ENCODE measurements at regions of chr19 and their contacts with region 1.

Region 1: GRCh38 chr19:47243776-47244547 is 12.4 kb upstream of the CCDC9 start:
- DNase-seq: peak; percentile 94
- H3K4me3 Mint-ChIP-seq: no peak overlapping the region
- H3K27ac Mint-ChIP-seq: no peak overlapping the region
- H3K4me1 Mint-ChIP-seq: peaks cover 5% of the 10 kb centered on the region
- H3K27me3 Mint-ChIP-seq: no peaks in the 10 kb centered on the region
- CTCF ChIP-seq: peak; percentile 95

Region 2: DNA sequence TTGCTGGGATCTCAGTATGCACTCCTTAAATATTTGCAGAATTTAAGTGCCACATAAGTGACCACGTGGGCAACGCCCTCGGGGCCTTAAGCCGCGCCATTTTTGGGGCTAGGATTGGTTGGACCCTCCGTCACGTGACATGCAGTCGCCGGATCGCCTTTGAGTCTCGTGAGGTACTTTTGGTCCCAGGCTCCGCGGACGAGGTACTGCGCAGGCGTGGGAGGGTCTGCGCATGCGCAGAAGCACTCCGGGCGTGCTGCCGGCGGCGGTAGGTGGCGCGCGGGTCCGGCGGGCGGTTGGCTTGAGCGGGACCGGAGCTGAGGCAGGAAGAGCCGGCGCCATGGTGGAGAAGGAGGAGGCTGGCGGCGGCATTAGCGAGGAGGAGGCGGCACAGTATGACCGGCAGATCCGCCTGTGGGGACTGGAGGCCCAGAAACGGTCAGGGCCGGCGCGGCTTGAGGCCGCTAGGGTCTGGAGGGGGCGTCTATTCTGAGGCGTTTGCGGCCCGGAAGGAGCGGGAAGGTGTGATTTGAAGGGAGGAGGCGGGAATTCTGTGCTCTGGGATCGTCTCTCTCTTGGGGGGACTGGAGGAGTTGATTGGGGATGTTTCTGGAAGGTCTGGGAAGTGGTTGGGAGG is 113.3 kb before region 1 on chr19 and contains the start of gene SAE1:
- CTCF ChIA-PET with region 1: interaction called, 8 read pairs
- POLR2A ChIA-PET with region 1: interaction called, 10 read pairs
- intact Hi-C with region 1: loop called (anchors 5 kb)
- DNase-seq: peak; percentile 98
- H3K4me3 Mint-ChIP-seq: peak within 1 kb of the TSS; percentile 99
- H3K27ac Mint-ChIP-seq: peak within 1 kb of the TSS; percentile 92
- H3K4me1 Mint-ChIP-seq: peaks cover 35% of the 10 kb centered on the region
- H3K27me3 Mint-ChIP-seq: no peaks in the 10 kb centered on the region
- CTCF ChIP-seq: peak; percentile 23
- total RNA-seq, gene SAE1: 76.1 and 81.7 TPM in 2 replicates

Region 3: DNA sequence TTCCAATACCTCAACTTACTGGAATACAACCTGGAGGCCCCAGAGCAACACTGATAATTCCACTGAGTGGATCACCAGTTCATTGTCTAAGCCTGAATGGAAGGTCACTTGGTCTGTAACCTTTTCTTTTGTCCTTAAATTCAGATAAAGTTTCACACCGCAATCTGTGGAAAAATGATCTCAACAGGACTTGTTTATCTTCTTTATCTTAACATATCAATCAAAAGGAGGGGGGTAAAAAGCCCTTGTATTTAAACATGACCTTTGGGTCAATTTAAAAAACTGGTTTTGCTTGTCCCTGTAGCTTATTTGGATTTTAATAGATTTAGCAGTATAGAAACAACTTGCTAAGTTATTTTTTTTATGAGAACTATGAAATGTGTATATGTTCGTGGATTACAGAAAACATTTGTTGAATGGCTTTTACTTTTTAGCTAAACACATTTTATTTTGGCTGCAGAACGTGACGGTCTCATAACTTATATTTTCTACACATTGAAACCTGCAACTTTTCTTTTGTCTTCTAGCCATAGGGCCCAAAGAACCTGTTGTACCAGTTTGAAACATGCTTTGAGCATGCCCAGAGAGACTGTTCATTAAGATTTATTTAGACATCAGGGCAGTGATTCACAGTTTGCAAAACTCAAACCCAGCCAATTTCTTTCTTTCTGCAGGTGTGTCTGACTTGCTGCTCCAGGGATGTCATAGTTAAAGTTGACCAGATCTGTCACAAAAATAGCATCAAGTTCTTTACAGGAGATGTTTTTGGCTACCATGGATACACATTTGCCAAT is 91.5 kb before region 1 on chr19:
- CTCF ChIA-PET with region 1: interaction called, 62 read pairs
- POLR2A ChIA-PET with region 1: interaction called, 7 read pairs
- intact Hi-C with region 1: loop called (anchors 1 kb)
- DNase-seq: no peak
- H3K4me3 Mint-ChIP-seq: peak overlapping the region; percentile 13
- H3K27ac Mint-ChIP-seq: peak overlapping the region; percentile 79
- H3K4me1 Mint-ChIP-seq: peaks cover 13% of the 10 kb centered on the region
- H3K27me3 Mint-ChIP-seq: no peaks in the 10 kb centered on the region
- CTCF ChIP-seq: no peak

Region 4: GRCh38 chr19:47210689-47211316 is 33.2 kb before region 1 on chr19:
- CTCF ChIA-PET with region 1: interaction called, 292 read pairs
- POLR2A ChIA-PET with region 1: interaction called, 75 read pairs
- intact Hi-C with region 1: loop called (anchors 1 kb)
- DNase-seq: peak; percentile 86
- H3K4me3 Mint-ChIP-seq: peak overlapping the region; percentile 31
- H3K27ac Mint-ChIP-seq: peak overlapping the region; percentile 88
- H3K4me1 Mint-ChIP-seq: peaks cover 7% of the 10 kb centered on the region
- H3K27me3 Mint-ChIP-seq: no peaks in the 10 kb centered on the region
- CTCF ChIP-seq: peak; percentile 77

Region 5: GRCh38 chr19:47231215-47231984 is 12.6 kb before region 1 on chr19:
- CTCF ChIA-PET with region 1: interaction called, 52 read pairs
- POLR2A ChIA-PET with region 1: interaction called, 46 read pairs
- intact Hi-C with region 1: loop called (anchors 1 kb)
- DNase-seq: peak; percentile 76
- H3K4me3 Mint-ChIP-seq: no peak overlapping the region
- H3K27ac Mint-ChIP-seq: peak overlapping the region; percentile 87
- H3K4me1 Mint-ChIP-seq: peaks cover 12% of the 10 kb centered on the region
- H3K27me3 Mint-ChIP-seq: no peaks in the 10 kb centered on the region
- CTCF ChIP-seq: no peak

Region 6: DNA sequence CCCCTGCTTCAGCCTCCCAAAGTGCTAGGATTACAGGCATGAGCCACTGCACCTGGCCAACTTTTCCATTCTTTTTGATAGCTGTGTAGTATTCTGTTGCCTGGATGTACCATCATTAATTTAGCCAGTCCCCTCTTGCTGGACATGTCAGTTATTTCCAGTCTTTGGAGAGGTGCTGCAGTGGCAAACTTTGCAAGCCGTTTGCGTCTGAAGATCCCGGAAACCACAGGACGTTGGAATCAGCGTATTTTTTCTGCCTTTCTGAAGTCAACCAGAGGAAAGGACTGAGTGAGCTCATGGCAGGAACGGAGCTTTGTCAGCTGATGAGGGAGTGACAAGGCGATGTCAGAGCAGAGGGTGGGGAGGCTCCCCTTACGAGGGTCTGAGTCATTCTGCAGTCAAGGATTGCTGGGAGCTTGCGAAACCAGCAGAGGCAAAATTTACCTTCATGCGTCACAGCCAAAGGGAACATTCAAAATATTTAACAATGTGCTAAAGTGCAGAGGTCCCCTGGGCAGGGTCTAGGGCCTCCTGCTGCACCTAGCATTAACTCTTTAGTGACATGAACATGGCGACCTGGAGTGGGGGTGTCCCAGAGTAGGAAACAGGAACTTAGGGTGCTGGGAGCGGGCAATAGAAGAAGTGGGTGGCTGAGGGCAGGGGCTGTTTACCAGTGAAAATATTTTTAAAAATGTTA is 71.3 kb after region 1 on chr19:
- CTCF ChIA-PET with region 1: no interaction called
- POLR2A ChIA-PET with region 1: no interaction called
- intact Hi-C with region 1: no loop called
- DNase-seq: peak; percentile 98
- H3K4me3 Mint-ChIP-seq: peak overlapping the region; percentile 10
- H3K27ac Mint-ChIP-seq: peak overlapping the region; percentile 96
- H3K4me1 Mint-ChIP-seq: peaks cover 32% of the 10 kb centered on the region
- H3K27me3 Mint-ChIP-seq: no peaks in the 10 kb centered on the region
- CTCF ChIP-seq: no peak